ENCODE measurements at regions of chr1 and their contacts with region 1.

Region 1: GRCh38 chr1:85692730-85693314 is 15.4 kb downstream of the ZNHIT6 start:
- DNase-seq: peak; percentile 6
- ATAC-seq: no peak
- H3K4me3 ChIP-seq: no peak overlapping the region
- H3K27ac ChIP-seq: no peak overlapping the region
- H3K4me1 ChIP-seq: no peaks in the 10 kb centered on the region
- H3K27me3 ChIP-seq: no peaks in the 10 kb centered on the region
- CTCF ChIP-seq: peak; percentile 34 to 81 (median 67); a peak in 4 of 6 replicates
- POLR2A ChIP-seq: no peak
- RAD21 ChIP-seq: peak; percentile 72

Region 2: GRCh38 chr1:85580872-85581801 is 111.7 kb before region 1 on chr1:
- CTCF ChIA-PET with region 1: interaction called, 3 read pairs
- POLR2A ChIA-PET with region 1: interaction called, 4 read pairs
- RAD21 ChIA-PET with region 1: no interaction called
- intact Hi-C with region 1: loop called (anchors 1 kb)
- DNase-seq: no peak
- ATAC-seq: peak; percentile 65
- H3K4me3 ChIP-seq: peak overlapping the region; percentile 74 to 93
- H3K27ac ChIP-seq: peak overlapping the region; percentile 71
- H3K4me1 ChIP-seq: peaks cover 32 to 72% of the 10 kb centered on the region in 2 experiments
- H3K27me3 ChIP-seq: no peaks in the 10 kb centered on the region
- CTCF ChIP-seq: peak; percentile 82 to 89 (median 83)
- POLR2A ChIP-seq: no peak
- RAD21 ChIP-seq: peak; percentile 81

Region 3: GRCh38 chr1:85607126-85607912 is 85.5 kb before region 1 on chr1:
- CTCF ChIA-PET with region 1: interaction called, 15 read pairs
- POLR2A ChIA-PET with region 1: no interaction called
- RAD21 ChIA-PET with region 1: interaction called, 6 to 9 read pairs
- intact Hi-C with region 1: loop called (anchors 5 kb)
- DNase-seq: peak; percentile 93
- ATAC-seq: peak; percentile 90
- H3K4me3 ChIP-seq: peak overlapping the region in 1 of 2 experiments; percentile 12; a peak in 2 of 4 replicates
- H3K27ac ChIP-seq: peak overlapping the region; percentile 47
- H3K4me1 ChIP-seq: peaks cover 39 to 57% of the 10 kb centered on the region in 2 experiments
- H3K27me3 ChIP-seq: no peaks in the 10 kb centered on the region
- CTCF ChIP-seq: no peak
- POLR2A ChIP-seq: no peak
- RAD21 ChIP-seq: peak; percentile 23; the same call in 1 of the 2 replicates

Region 4: DNA sequence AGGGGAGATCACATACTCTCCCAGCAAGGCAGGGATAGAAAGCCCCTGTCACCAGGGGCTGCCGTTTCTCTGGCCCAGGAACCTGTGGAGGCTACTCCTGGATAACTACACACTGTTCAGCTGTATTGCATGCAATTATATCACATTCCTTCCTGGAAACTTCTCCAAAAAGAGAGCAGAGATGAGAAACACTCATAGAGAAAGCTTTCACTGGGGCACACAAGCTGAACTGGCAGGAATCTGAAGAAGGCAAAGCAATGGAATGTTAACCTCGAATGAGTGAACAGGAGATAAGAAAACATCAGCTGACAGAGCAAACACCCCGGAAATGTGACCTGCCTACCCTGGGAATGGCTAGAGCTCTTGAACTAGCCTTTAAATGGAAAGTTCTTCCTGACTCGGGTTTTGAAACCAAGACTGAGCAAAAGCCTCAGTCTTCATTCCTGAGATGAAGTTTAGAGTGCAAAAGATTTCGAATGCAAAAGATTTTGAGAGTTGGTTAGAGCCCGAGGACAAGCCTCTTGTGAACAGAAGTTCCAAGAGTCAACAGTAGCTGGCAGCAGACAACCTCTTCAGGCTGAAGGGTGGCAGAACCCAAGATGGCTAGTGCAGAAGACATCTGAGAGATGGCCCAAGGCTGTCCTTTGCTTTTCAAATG is 80.0 kb before region 1 on chr1:
- CTCF ChIA-PET with region 1: interaction called, 15 read pairs
- POLR2A ChIA-PET with region 1: no interaction called
- RAD21 ChIA-PET with region 1: interaction called, 5 read pairs
- intact Hi-C with region 1: loop called (anchors 5 kb)
- DNase-seq: no peak
- ATAC-seq: peak; percentile 72
- H3K4me3 ChIP-seq: no peak overlapping the region
- H3K27ac ChIP-seq: no peak overlapping the region
- H3K4me1 ChIP-seq: peaks cover 26 to 46% of the 10 kb centered on the region in 2 experiments
- H3K27me3 ChIP-seq: no peaks in the 10 kb centered on the region
- CTCF ChIP-seq: peak; percentile 46 to 85 (median 72); a peak in 5 of 6 replicates
- POLR2A ChIP-seq: no peak
- RAD21 ChIP-seq: peak; percentile 79

Region 5: GRCh38 chr1:85707990-85708828 is 15.4 kb after region 1 on chr1 and contains the start of gene ZNHIT6:
- CTCF ChIA-PET with region 1: interaction called, 14 read pairs
- POLR2A ChIA-PET with region 1: interaction called, 5 read pairs
- RAD21 ChIA-PET with region 1: no interaction called
- intact Hi-C with region 1: no loop called
- DNase-seq: peak; percentile 97
- ATAC-seq: peak; percentile 96
- H3K4me3 ChIP-seq: peak within 1 kb of the TSS; percentile 93 to 97
- H3K27ac ChIP-seq: peak within 1 kb of the TSS; percentile 73
- H3K4me1 ChIP-seq: peaks cover 13 to 19% of the 10 kb centered on the region in 2 experiments; a peak in 3 of 4 replicates
- H3K27me3 ChIP-seq: no peaks in the 10 kb centered on the region
- CTCF ChIP-seq: peak in 2 of 3 experiments; percentile 48 to 51; a peak in 4 of 6 replicates
- POLR2A ChIP-seq: peak; percentile 73
- RAD21 ChIP-seq: no peak; the same call in 1 of the 2 replicates
- total RNA-seq, gene ZNHIT6: 18.4 TPM

Region 6: GRCh38 chr1:86035101-86035500 is 342.3 kb after region 1 on chr1:
- CTCF ChIA-PET with region 1: no interaction called
- POLR2A ChIA-PET with region 1: no interaction called
- RAD21 ChIA-PET with region 1: no interaction called
- intact Hi-C with region 1: no loop called
- DNase-seq: no peak
- ATAC-seq: no peak
- H3K4me3 ChIP-seq: no peak overlapping the region
- H3K27ac ChIP-seq: no peak overlapping the region
- H3K4me1 ChIP-seq: no peaks in the 10 kb centered on the region
- H3K27me3 ChIP-seq: no peaks in the 10 kb centered on the region
- CTCF ChIP-seq: no peak
- POLR2A ChIP-seq: no peak
- RAD21 ChIP-seq: no peak